ENCODE measurements at regions of chr19 and their contacts with region 1.

Region 1: DNA sequence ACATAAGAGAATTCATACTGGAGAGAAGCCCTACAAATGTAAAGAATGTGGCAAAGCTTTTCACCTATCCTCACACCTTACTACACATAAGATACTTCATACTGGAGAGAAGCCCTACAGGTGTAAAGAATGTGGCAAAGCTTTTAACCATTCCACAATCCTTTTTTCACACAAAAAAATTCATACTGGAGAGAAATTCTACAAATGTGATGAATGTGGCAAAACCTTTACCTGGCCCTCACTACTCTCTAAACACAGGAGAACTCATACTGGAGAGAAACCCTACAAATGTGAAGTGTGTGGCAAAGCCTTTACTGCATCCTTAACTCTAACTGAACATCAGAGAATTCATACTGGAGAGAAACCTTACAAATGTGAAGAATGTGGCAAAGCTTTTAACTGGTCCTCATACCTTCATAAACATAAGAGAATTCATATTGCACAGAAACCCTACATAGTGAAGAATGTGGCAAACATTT is 14.0 kb upstream of the ZNF506 start:
- DNase-seq: no peak
- ATAC-seq: no peak
- H3K4me3 Mint-ChIP-seq: no peak overlapping the region
- H3K27ac Mint-ChIP-seq: no peak overlapping the region
- H3K4me1 Mint-ChIP-seq: no peaks in the 10 kb centered on the region
- H3K27me3 Mint-ChIP-seq: no peaks in the 10 kb centered on the region

Region 2: GRCh38 chr19:19711934-19712828 is 123.4 kb before region 1 on chr19:
- CTCF ChIA-PET with region 1: no interaction called
- POLR2A ChIA-PET with region 1: no interaction called
- intact Hi-C with region 1: loop called in 1 of 2 experiments (anchors 5 kb)
- DNase-seq: no peak
- ATAC-seq: no peak
- H3K4me3 Mint-ChIP-seq: no peak overlapping the region
- H3K27ac Mint-ChIP-seq: no peak overlapping the region
- H3K4me1 Mint-ChIP-seq: no peaks in the 10 kb centered on the region
- H3K27me3 Mint-ChIP-seq: no peaks in the 10 kb centered on the region

Region 3: DNA sequence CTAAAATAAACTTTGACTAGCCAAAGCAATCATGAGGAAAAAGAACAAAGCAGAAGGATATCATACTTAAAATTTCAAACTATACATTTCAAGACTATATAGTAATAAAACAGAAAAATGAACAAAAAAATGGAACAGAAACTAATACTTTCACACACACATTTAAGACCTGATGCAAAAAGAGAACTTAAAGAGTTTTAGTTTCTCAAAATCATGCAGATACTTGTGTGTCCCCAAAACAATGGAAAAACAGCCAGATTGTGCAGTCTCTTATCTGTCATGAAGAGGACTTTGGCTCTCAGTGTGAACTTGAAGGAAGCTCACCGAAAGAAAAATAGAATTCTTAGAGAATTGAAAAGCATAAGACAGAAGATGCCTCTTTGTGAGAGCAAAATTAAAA is 30.1 kb before region 1 on chr19:
- CTCF ChIA-PET with region 1: no interaction called
- POLR2A ChIA-PET with region 1: no interaction called
- intact Hi-C with region 1: no loop called
- DNase-seq: no peak
- ATAC-seq: peak; percentile 58
- H3K4me3 Mint-ChIP-seq: no peak overlapping the region
- H3K27ac Mint-ChIP-seq: peak overlapping the region; percentile 78
- H3K4me1 Mint-ChIP-seq: peaks cover 32% of the 10 kb centered on the region
- H3K27me3 Mint-ChIP-seq: no peaks in the 10 kb centered on the region

Region 4: GRCh38 chr19:19937403-19937802 is 101.8 kb after region 1 on chr19:
- CTCF ChIA-PET with region 1: no interaction called
- POLR2A ChIA-PET with region 1: no interaction called
- intact Hi-C with region 1: loop called in 1 of 2 experiments (anchors 5 kb)
- DNase-seq: no peak
- ATAC-seq: no peak
- H3K4me3 Mint-ChIP-seq: no peak overlapping the region
- H3K27ac Mint-ChIP-seq: no peak overlapping the region
- H3K4me1 Mint-ChIP-seq: no peaks in the 10 kb centered on the region
- H3K27me3 Mint-ChIP-seq: no peaks in the 10 kb centered on the region

Measured in activated CD4-positive, alpha-beta T cell treated with anti-CD3 and anti-CD28 coated beads for 36 hours (primary cell).